ENCODE measurements at regions of chr4 and their contacts with region 1.

Region 1: GRCh38 chr4:34733185-34733941 is 1511.0 kb downstream of the ARAP2 start:
- DNase-seq: peak; percentile 65 to 67
- H3K4me3 ChIP-seq: no peak overlapping the region
- H3K4me3 Mint-ChIP-seq: peak overlapping the region; percentile 61
- H3K27ac Mint-ChIP-seq: peak overlapping the region; percentile 75
- H3K4me1 ChIP-seq: peaks cover 30% of the 10 kb centered on the region
- H3K4me1 Mint-ChIP-seq: peaks cover 17% of the 10 kb centered on the region
- H3K27me3 ChIP-seq: no peaks in the 10 kb centered on the region
- H3K27me3 Mint-ChIP-seq: no peaks in the 10 kb centered on the region
- CTCF ChIP-seq: no peak

Region 2: GRCh38 chr4:34720571-34720970 is 12.8 kb before region 1 on chr4:
- CTCF ChIA-PET with region 1: no interaction called
- POLR2A ChIA-PET with region 1: no interaction called
- intact Hi-C with region 1: loop called (anchors 1 kb)
- DNase-seq: peak in 1 of 2 experiments; percentile 16
- H3K4me3 ChIP-seq: no peak overlapping the region
- H3K4me3 Mint-ChIP-seq: no peak overlapping the region
- H3K27ac Mint-ChIP-seq: no peak overlapping the region
- H3K4me1 ChIP-seq: peaks cover 11% of the 10 kb centered on the region; the same call in 1 of the 2 replicates
- H3K4me1 Mint-ChIP-seq: peaks cover 8% of the 10 kb centered on the region
- H3K27me3 ChIP-seq: no peaks in the 10 kb centered on the region
- H3K27me3 Mint-ChIP-seq: peaks cover under 1% of the 10 kb centered on the region
- CTCF ChIP-seq: peak; percentile 40 to 43

Region 3: GRCh38 chr4:34766935-34767334 is 33.6 kb after region 1 on chr4:
- CTCF ChIA-PET with region 1: no interaction called
- POLR2A ChIA-PET with region 1: no interaction called
- intact Hi-C with region 1: loop called (anchors 5 kb)
- DNase-seq: no peak
- H3K4me3 ChIP-seq: no peak overlapping the region
- H3K4me3 Mint-ChIP-seq: no peak overlapping the region
- H3K27ac Mint-ChIP-seq: no peak overlapping the region
- H3K4me1 ChIP-seq: no peaks in the 10 kb centered on the region
- H3K4me1 Mint-ChIP-seq: no peaks in the 10 kb centered on the region
- H3K27me3 ChIP-seq: no peaks in the 10 kb centered on the region
- H3K27me3 Mint-ChIP-seq: peaks cover 6% of the 10 kb centered on the region
- CTCF ChIP-seq: no peak